Posterior vena cava (tissue), 2 donors: ENCODE measurements at regions of chr19 and their contacts with region 1.

Region 1: DNA sequence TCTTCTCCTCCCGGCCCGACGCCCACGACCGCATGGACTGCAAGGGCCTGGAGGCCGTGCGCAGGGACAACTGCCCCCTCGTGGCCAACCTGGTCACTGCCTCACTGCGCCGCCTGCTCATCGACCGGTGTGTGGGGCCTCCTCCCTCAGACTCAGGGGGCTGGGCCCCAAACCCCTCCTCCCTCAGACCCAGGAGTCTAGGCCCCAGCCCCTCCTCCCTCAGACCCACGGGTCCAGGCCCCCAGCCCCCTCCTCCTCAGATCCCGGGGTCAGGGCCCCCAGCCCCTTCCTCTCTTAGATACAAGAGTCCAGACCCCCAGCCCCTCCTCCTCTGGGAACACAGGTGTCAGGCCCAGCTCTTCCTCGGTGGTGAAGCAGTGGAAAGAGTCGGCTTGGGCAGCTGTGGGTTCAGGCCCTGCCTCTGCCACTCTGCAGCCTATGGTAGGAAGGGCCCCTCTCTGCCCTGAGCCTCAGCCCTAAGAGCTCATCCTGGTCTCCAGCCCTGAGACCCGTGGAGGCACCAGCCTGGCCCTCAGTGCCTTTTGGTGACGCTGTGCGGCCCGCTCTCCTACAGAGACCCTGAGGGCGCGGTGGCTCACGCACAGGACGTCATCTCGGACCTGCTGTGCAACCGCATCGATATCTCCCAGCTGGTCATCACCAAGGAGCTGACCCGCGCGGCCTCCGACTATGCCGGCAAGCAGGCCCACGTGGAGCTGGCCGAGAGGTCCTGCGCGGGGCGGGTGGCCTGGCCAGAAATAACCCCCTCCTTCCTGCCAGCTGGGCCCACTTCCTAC is 3.7 kb upstream of the SPIB start:
- DNase-seq: peak; percentile 94

Region 2: DNA sequence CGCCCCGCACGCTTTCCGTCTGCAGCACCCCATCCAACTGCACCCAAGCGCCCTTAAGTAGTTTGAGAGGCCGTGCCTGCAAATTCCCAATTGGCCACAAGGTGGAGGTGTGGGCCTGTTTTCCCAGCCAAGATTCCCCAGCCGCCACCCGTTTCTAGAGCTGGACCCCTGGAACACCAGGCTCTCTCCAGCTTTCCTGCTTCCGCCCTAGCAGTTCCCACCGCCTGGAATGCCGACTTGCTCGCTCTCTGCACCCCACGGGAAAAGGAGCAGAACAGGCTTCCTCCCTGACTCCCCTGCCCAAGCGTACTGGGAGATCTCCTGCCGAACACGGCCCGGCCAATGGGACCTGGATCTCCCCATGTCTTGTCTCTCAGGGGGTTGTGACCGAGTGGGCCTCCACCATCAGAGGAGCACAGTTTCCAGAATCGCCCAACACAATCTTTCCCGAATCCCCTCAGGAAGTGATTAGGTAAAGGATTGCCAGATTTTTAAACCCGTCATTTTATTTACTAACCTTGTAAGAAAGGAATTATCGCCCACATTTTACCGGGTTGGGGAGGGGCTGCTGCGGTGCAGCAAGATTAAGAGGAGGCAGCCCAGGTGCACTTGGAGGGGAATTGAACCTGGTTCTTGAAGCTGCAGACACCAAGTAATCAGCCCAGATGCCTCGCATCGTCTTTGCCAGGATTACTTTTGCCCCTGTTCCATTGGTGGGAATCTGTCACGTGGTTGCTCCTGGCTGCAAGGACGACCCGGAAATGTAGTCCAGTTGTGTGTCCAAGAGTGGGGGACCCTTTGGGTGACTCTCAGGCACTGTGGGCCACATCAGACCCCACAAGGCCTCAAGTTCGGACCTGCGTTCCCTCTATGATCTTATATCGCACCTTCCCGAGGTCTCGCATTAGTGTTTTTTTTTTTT is 46.2 kb before region 1 on chr19:
- intact Hi-C with region 1: loop called in 1 of 2 experiments (anchors 10 kb)
- DNase-seq: peak; percentile 93